Dorsolateral prefrontal cortex (tissue), 120 donors: ENCODE measurements at regions of chr9 and their contacts with region 1.

Region 1: GRCh38 chr9:72526901-72527800 is 5.7 kb downstream of the TMC1 start:
- DNase-seq: peak; percentile 35 to 89 (median 74)
- H3K4me3 ChIP-seq: peak overlapping the region; percentile 8 to 67 (median 47)
- H3K27ac ChIP-seq: peak overlapping the region in 57 of 59 donors; percentile 4 to 88 (median 71)
- H3K27me3 ChIP-seq: no peaks in the 10 kb centered on the region
- CTCF ChIP-seq: peak in 5 of 56 donors; percentile 11 to 22 (median 14)

Region 2: DNA sequence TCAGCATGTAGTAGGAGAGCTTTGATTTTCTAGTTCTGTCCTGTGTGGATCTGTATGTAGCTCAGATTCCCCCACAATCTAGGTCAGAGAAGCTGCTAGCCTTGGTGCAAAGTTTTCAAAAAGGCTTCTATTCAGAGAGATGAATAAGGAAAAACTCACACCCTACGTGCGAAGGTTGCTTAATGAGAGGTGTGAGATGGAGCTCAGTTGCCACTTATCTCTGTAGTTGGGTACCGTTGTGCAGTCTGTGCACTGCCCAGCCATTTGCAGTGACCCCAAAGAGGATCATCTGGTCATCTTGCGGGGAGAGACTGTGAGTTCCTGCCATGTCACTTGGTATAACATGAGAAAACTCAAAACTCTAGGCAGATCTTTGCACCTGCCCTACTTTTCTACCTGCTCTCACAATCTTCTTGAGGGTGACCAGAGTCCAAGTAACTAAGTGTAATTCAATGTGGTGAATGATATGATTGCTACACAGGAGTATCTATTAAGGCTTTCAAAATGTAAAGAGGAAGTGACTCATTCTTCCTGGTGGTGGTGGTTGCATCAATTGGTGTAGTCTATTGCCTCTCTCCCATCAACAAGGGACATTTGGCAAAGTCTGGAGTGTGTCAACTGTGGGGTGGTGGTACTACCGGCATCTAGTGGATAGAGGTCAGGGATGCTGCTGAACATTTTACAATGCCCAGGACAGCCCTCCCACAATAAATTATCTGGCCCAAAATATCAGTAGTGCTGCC is 59.4 kb after region 1 on chr9:
- intact Hi-C with region 1: loop called in 1 of 2 experiments (anchors 5 kb)
- DNase-seq: no peak
- H3K4me3 ChIP-seq: no peak overlapping the region
- H3K27ac ChIP-seq: peak overlapping the region in 44 of 59 donors; percentile 3 to 83 (median 52)
- H3K27me3 ChIP-seq: no peaks in the 10 kb centered on the region
- CTCF ChIP-seq: no peak